GM10248 (cell line): ENCODE measurements at regions of chr10 and their contacts with region 1.

Region 1: DNA sequence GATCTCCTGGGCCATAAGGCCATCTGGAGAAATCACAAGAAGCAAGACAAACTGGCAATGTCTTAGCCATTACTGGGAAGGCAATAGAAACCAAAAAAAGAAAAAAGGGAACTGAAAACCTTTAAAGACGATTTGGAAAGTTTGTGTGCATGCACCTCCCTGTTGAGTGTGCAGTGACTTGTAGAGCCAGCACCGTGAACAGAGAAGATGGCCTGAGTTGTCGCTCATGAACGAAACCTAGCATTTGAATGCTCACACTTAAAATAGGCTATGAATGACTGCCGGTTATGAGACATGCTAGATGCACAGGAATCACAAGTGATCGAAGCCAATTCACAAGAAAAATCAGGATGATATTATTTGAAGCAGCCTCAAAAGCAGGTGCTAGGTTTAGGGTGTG is 151.3 kb upstream of the ADO start:
- DNase-seq: peak; percentile 68
- CTCF ChIP-seq: no peak

Region 2: DNA sequence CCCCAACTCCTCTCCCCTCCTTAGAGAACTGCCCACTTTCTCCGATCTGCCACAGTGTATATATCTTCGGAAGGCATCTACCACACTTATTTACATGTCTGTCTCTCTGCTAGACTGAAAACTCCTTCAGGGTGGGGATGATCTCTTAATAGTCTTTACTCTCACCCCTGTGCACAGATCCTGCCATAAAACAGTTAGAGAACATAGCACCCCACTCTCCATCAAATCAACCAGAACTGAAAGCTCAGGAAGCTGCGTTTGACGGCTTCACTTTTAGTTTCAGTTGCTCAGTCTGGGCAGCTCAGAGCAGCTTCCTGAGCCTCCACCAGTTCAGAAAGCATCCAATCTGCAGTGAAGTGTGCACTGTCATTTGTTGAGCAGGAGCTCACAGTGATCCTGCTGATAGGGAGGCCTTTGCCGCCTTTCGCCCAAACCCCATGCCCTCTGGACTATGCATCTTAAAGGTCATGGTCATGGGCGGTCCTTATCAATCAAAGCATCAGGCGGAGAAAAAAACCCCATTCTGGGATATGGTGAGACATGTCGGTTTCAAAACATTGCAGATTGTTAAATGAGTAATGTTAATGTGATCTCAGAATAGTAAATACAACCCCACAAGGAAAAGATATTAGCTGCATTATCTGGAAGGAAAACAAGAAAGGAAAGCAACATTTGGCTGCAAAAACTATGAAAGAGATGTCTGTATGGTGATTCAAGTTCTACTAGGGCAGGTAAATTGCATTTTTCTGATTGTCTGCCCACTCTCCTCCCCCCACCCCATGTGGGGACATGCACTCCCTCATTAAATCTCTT is 15.8 kb before region 1 on chr10:
- CTCF ChIA-PET with region 1: interaction called, 64 read pairs
- POLR2A ChIA-PET with region 1: interaction called, 3 read pairs
- DNase-seq: peak; percentile 26
- CTCF ChIP-seq: no peak

Region 3: GRCh38 chr10:62669341-62669740 is 16.1 kb after region 1 on chr10:
- CTCF ChIA-PET with region 1: interaction called, 16 read pairs
- POLR2A ChIA-PET with region 1: no interaction called
- DNase-seq: no peak
- CTCF ChIP-seq: no peak

Region 4: DNA sequence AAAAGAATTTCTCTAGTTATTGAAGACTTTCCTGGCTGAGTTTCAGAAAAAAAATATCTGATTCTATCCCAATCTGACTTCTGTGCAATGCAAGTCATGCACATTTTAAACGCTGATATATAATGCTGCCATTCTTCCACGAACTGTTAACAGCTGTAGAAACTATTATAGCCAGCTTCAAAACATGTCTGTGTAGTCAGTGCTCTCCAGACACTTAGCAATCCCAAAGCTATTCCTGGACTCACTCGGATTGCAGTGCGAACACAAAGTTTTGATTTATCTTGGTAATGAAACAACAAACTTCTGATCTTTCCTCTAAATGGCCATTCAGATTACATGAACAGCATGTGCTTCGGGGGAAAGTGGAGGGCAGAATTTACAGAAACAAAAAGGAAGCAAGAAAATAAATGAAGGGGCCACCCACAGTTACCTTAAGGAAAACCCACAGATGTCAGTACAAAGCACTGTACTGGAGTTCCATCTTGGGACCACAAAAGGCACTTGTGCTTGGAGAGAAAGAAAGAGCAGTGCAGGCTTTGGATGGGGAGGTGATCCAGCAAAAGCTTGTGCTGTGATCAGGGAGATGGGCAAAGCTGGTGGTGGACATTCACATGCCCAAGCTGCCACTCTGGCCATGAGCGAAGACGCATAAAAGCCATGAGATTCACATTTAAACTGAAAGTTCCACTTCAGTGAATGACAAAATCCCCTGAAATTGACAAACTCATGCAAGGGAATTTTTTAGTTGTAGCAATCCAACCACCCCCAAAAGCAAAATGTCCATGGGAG is 119.1 kb after region 1 on chr10:
- CTCF ChIA-PET with region 1: no interaction called
- POLR2A ChIA-PET with region 1: no interaction called
- DNase-seq: no peak
- CTCF ChIP-seq: no peak